ENCODE measurements at regions of chr17 and their contacts with region 1.

Region 1: GRCh38 chr17:58329035-58329809 is 627 bp upstream of the TSPOAP1 start:
- DNase-seq: peak; percentile 95 to 98 (median 97)
- H3K4me3 ChIP-seq: peak overlapping the region; percentile 72 to 100 (median 99)
- H3K4me3 Mint-ChIP-seq: peak overlapping the region; percentile 75 to 99
- H3K27ac ChIP-seq: peak overlapping the region; percentile 88 to 100
- H3K27ac Mint-ChIP-seq: peak overlapping the region; percentile 90 to 99 (median 98)
- H3K4me1 ChIP-seq: peaks cover 76 to 80% of the 10 kb centered on the region in 2 donors
- H3K4me1 Mint-ChIP-seq: peaks cover 67% of the 10 kb centered on the region
- H3K27me3 ChIP-seq: peaks cover 8 to 23% of the 10 kb centered on the region in 2 donors
- H3K27me3 Mint-ChIP-seq: peaks cover 22 to 32% (median 29%) of the 10 kb centered on the region in 3 donors
- CTCF ChIP-seq: peak; percentile 77

Region 2: GRCh38 chr17:58156839-58157803 is 172.1 kb before region 1 on chr17:
- intact Hi-C with region 1: no loop called
- DNase-seq: peak; percentile 14 to 25 (median 24)
- H3K4me3 ChIP-seq: peak overlapping the region; percentile 19 to 82 (median 46)
- H3K4me3 Mint-ChIP-seq: peak overlapping the region; percentile 88 to 99
- H3K27ac ChIP-seq: no peak overlapping the region
- H3K27ac Mint-ChIP-seq: peak overlapping the region in 3 of 7 donors; percentile 13 to 72 (median 19)
- H3K4me1 ChIP-seq: peaks cover 19 to 31% of the 10 kb centered on the region in 2 donors
- H3K4me1 Mint-ChIP-seq: peaks cover 33% of the 10 kb centered on the region
- H3K27me3 ChIP-seq: peaks cover 4 to 21% of the 10 kb centered on the region in 2 donors
- H3K27me3 Mint-ChIP-seq: peaks cover 23 to 32% (median 29%) of the 10 kb centered on the region in 3 donors
- CTCF ChIP-seq: no peak

Region 3: DNA sequence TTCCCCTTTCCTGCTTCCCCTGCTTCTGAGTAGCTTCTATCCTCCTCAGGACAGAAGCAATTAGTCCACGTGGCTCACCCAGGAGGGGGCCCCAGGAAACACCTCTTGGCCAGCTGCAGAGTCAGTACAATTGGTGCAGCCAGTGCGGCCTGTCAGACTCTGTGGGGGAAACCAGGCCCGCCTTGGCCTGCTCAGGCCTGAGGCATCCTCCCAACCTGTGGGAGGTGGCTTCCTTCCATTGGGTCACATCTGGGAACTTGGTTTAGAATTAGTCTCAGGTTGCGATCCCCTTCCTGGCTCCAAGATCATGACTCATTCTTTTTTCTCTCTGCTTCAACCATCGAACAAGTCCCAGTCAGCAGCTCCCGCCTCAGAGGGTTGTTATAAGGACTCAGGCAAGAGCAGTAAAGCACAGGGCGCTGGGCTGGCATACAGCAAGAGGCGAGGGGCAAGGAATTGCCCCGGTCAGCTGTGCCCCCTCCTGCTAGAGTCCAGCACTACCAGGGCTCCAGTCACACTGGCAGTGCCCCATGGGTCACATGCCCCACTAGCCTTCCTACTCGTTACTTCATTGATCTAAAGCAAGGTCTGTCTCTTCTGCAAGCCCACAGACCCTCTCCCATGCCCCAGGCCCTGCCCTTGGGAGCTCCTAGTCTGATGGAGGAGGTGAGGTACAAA is 144.8 kb before region 1 on chr17:
- intact Hi-C with region 1: no loop called
- DNase-seq: no peak
- H3K4me3 ChIP-seq: no peak overlapping the region
- H3K4me3 Mint-ChIP-seq: no peak overlapping the region
- H3K27ac ChIP-seq: no peak overlapping the region
- H3K27ac Mint-ChIP-seq: peak overlapping the region in 1 of 7 donors; percentile 66
- H3K4me1 ChIP-seq: peaks cover 0 to 4% of the 10 kb centered on the region in 2 donors
- H3K4me1 Mint-ChIP-seq: peaks cover 20% of the 10 kb centered on the region
- H3K27me3 ChIP-seq: no peaks in the 10 kb centered on the region
- H3K27me3 Mint-ChIP-seq: peaks cover 1 to 9% (median 8%) of the 10 kb centered on the region in 3 donors
- CTCF ChIP-seq: no peak

Region 4: DNA sequence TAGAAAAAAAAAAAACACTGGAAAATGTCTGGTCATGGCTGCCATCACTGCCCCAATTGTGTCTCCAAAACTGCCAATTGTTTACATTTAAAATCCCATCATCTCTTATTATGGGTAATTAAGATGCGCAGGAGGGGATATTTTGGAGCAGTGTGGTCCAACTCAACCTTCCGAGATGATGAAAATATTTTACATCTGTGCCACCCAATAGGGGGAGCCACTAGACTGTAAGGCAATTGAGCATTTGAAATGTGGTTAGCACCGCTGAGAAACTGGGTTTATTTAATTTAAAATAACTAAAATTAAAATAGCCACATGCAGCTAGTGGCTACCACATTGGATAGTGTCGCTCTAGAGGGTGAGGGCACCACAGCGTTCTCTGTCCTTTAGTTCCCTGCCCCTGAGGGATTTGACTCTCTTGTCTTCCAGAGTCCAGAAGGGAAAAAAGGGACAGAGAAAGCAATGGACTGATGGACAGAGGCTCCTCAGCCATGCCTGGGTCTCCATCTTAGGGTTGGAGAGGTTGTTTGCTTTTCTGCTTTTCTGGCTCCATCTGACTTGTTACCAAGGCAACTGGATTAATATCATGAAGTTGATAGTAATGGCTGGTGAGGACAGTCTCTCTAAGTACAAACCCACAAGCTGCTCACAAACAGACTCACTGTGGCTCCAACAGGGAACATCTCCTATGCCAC is 52.0 kb before region 1 on chr17:
- intact Hi-C with region 1: loop called in 1 of 2 experiments (anchors 5 kb)
- DNase-seq: peak in 2 of 3 donors; percentile 38 to 49
- H3K4me3 ChIP-seq: peak overlapping the region in 2 of 3 experiments; percentile 3 to 74
- H3K4me3 Mint-ChIP-seq: peak overlapping the region; percentile 76 to 93
- H3K27ac ChIP-seq: peak overlapping the region; percentile 69 to 84
- H3K27ac Mint-ChIP-seq: peak overlapping the region in 6 of 7 donors; percentile 82 to 98 (median 93)
- H3K4me1 ChIP-seq: peaks cover 85 to 91% of the 10 kb centered on the region in 2 donors
- H3K4me1 Mint-ChIP-seq: peaks cover 89% of the 10 kb centered on the region
- H3K27me3 ChIP-seq: no peaks in the 10 kb centered on the region
- H3K27me3 Mint-ChIP-seq: peaks cover 0 to 3% (median 3%) of the 10 kb centered on the region in 3 donors
- CTCF ChIP-seq: peak; percentile 83

Region 5: DNA sequence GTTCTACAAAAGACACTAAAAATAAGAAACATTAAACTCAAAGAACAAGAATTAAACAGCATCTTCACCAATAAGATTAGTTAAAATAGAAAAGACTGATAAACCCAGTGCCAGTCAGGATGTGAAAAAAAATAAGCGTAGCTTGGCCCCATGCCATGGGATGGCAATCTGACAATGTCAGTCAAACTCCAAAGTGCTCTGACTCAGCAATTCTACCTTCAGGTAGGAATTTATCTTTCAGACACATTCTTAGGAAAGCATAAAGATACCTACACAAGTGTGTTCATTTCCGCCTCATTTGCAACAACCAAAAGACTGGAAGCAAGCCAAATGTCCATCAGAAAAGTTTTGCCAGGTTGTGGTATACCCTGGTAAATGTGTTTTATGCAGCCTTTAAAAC is 39.4 kb before region 1 on chr17:
- intact Hi-C with region 1: loop called in 1 of 2 experiments (anchors 2 kb)
- DNase-seq: no peak
- H3K4me3 ChIP-seq: peak overlapping the region in 1 of 3 experiments; percentile 54
- H3K4me3 Mint-ChIP-seq: peak overlapping the region; percentile 0 to 51
- H3K27ac ChIP-seq: peak overlapping the region in 1 of 2 donors; percentile 72
- H3K27ac Mint-ChIP-seq: peak overlapping the region; percentile 26 to 97 (median 90)
- H3K4me1 ChIP-seq: peaks cover 59 to 81% of the 10 kb centered on the region in 2 donors
- H3K4me1 Mint-ChIP-seq: peaks cover 76% of the 10 kb centered on the region
- H3K27me3 ChIP-seq: no peaks in the 10 kb centered on the region
- H3K27me3 Mint-ChIP-seq: no peaks in the 10 kb centered on the region
- CTCF ChIP-seq: no peak

Region 6: DNA sequence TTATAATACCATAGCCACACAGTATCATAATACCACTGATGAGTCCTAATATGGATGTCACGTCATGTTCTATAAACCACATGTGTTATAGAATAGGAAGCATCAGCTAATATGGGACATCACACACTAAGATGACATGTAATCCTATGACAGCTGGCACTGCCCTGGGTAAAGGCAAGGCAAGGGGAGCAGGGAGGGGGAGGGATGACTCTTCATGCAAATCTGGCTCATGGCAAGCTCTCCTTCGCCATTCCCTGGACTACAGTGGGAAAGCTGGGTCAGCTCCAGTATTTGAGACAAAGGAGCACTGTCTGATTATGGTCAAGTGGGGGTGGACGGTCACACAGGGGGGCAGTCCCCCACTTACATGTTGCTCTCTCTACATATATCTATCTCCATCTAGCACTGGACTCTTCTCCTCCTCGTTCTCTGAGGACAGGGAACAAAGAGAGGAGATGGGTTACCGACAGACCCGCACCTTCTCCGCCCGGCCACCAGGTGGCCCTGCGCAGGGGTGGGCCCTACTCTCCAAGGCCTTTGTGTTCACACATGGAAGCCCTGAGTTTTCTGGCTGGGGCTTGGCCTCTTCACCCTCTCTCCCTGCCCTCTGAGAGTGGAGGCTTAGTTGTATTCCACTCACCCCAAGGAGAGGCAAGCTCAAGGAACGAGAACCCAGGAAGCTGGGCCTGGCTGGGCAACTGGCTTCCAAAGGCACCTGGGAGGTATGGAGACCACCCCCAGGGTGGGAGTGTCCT is 25.1 kb before region 1 on chr17:
- intact Hi-C with region 1: no loop called
- DNase-seq: peak; percentile 59 to 64 (median 61)
- H3K4me3 ChIP-seq: no peak overlapping the region
- H3K4me3 Mint-ChIP-seq: peak overlapping the region in 1 of 2 donors; percentile 20
- H3K27ac ChIP-seq: no peak overlapping the region
- H3K27ac Mint-ChIP-seq: peak overlapping the region in 5 of 7 donors; percentile 35 to 93 (median 84)
- H3K4me1 ChIP-seq: peaks cover 60 to 68% of the 10 kb centered on the region in 2 donors
- H3K4me1 Mint-ChIP-seq: peaks cover 77% of the 10 kb centered on the region
- H3K27me3 ChIP-seq: no peaks in the 10 kb centered on the region
- H3K27me3 Mint-ChIP-seq: peaks cover under 1 to 7% (median 6%) of the 10 kb centered on the region in 3 donors
- CTCF ChIP-seq: peak; percentile 87

Region 7: GRCh38 chr17:58344047-58344790 is 15.0 kb after region 1 on chr17:
- intact Hi-C with region 1: loop called in 1 of 2 experiments (anchors 2 kb)
- DNase-seq: peak; percentile 70 to 94 (median 90)
- H3K4me3 ChIP-seq: peak overlapping the region in 1 of 3 experiments; percentile 58
- H3K4me3 Mint-ChIP-seq: peak overlapping the region; percentile 63 to 75
- H3K27ac ChIP-seq: peak overlapping the region; percentile 91 to 92
- H3K27ac Mint-ChIP-seq: peak overlapping the region; percentile 92 to 98 (median 94)
- H3K4me1 ChIP-seq: peaks cover 65 to 74% of the 10 kb centered on the region in 2 donors
- H3K4me1 Mint-ChIP-seq: peaks cover 73% of the 10 kb centered on the region
- H3K27me3 ChIP-seq: no peaks in the 10 kb centered on the region
- H3K27me3 Mint-ChIP-seq: peaks cover 0 to 4% (median 0%) of the 10 kb centered on the region in 3 donors
- CTCF ChIP-seq: no peak

Region 8: GRCh38 chr17:58352014-58352842 is 23.0 kb after region 1 on chr17 and contains the start of gene SUPT4H1:
- intact Hi-C with region 1: loop called in 1 of 2 experiments (anchors 2 kb)
- DNase-seq: peak; percentile 91 to 92 (median 92)
- H3K4me3 ChIP-seq: peak within 1 kb of the TSS; percentile 79 to 97 (median 94)
- H3K4me3 Mint-ChIP-seq: peak within 1 kb of the TSS; percentile 100
- H3K27ac ChIP-seq: peak within 1 kb of the TSS; percentile 89 to 95
- H3K27ac Mint-ChIP-seq: peak within 1 kb of the TSS; percentile 98 to 100 (median 99)
- H3K4me1 ChIP-seq: peaks cover 25 to 38% of the 10 kb centered on the region in 2 donors
- H3K4me1 Mint-ChIP-seq: peaks cover 44% of the 10 kb centered on the region
- H3K27me3 ChIP-seq: no peaks in the 10 kb centered on the region
- H3K27me3 Mint-ChIP-seq: peaks cover 0 to 2% (median under 1%) of the 10 kb centered on the region in 3 donors
- CTCF ChIP-seq: no peak
- polyA plus RNA-seq, gene SUPT4H1: 144 to 251 (median 241) TPM

Region 9: GRCh38 chr17:58364270-58364942 is 35.2 kb after region 1 on chr17:
- intact Hi-C with region 1: loop called in 1 of 2 experiments (anchors 5 kb)
- DNase-seq: no peak
- H3K4me3 ChIP-seq: no peak overlapping the region
- H3K4me3 Mint-ChIP-seq: no peak overlapping the region
- H3K27ac ChIP-seq: no peak overlapping the region
- H3K27ac Mint-ChIP-seq: no peak overlapping the region
- H3K4me1 ChIP-seq: no peaks in the 10 kb centered on the region
- H3K4me1 Mint-ChIP-seq: peaks cover 1% of the 10 kb centered on the region
- H3K27me3 ChIP-seq: no peaks in the 10 kb centered on the region
- H3K27me3 Mint-ChIP-seq: peaks cover 4 to 18% (median 14%) of the 10 kb centered on the region in 3 donors
- CTCF ChIP-seq: no peak